Pancreas (tissue), 10 donors: ENCODE measurements at regions of chr14 and their contacts with region 1.

Region 1: DNA sequence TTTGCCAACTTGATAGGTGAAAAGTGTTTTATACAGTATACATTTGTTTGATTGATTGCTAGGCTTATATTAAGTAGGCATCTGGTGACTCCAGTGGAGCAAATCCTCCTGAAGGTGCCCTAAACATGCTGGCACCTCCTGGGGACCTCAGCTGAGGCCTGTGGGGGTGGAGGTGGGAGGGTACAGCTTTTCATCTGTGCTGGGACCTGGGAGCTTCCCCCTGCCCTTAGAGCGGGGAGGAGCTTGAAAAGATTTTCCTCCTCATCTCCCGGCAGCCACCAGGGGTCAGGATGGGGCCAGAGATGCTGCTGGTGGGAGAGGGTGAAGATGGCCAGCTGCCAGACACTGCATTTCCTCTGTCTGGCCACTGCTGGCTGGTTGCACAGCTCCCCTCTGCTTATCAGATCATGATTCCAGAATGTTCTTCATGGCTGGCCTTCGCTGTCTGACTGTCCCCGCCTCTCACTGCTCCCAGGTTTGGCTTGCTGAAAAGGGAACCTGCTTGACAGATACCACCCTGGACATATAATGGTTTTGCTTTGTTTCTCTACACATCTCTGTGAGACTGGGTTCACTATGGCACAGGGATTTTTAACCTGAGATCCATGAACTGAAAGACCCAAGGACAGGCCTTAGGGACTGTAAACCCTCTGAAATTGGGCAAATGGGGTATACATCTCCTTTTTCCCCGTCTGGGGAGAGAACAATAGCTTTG is 10.5 kb upstream of the JPH4 start:
- DNase-seq: peak; percentile 90 to 97 (median 95)
- ATAC-seq: peak; percentile 99 to 100 (median 100)
- H3K4me3 ChIP-seq: no peak overlapping the region
- H3K27ac ChIP-seq: peak overlapping the region in 2 of 4 donors; percentile 63 to 76
- H3K4me1 ChIP-seq: peaks cover 0 to 5% (median 0%) of the 10 kb centered on the region in 3 donors
- H3K27me3 ChIP-seq: no peaks in the 10 kb centered on the region
- CTCF ChIP-seq: peak; percentile 61 to 86 (median 80)

Region 2: GRCh38 chr14:23494223-23494622 is 94.8 kb before region 1 on chr14:
- intact Hi-C with region 1: no loop called
- DNase-seq: no peak
- ATAC-seq: no peak
- H3K4me3 ChIP-seq: no peak overlapping the region
- H3K27ac ChIP-seq: no peak overlapping the region
- H3K4me1 ChIP-seq: no peaks in the 10 kb centered on the region
- H3K27me3 ChIP-seq: no peaks in the 10 kb centered on the region
- CTCF ChIP-seq: no peak

Region 3: GRCh38 chr14:23903442-23903841 is 314.4 kb after region 1 on chr14:
- intact Hi-C with region 1: loop called in 1 of 3 experiments (anchors 10 kb)
- DNase-seq: no peak
- ATAC-seq: no peak
- H3K4me3 ChIP-seq: no peak overlapping the region
- H3K27ac ChIP-seq: no peak overlapping the region
- H3K4me1 ChIP-seq: no peaks in the 10 kb centered on the region
- H3K27me3 ChIP-seq: no peaks in the 10 kb centered on the region
- CTCF ChIP-seq: no peak